Activated T-helper 2 cell treated with anti-CD3 and anti-CD28 coated beads, Interferon-gamma antibody, Interleukin-2, Interleukin-4, amounts not matched to agents 10 μg/mL and 5 μg/mL and 100 μg/mL, durations not matched to agents 14 hours and 24 hours and 36 hours (primary cell): ENCODE measurements at regions of chr18 and their contacts with region 1.

Region 1: DNA sequence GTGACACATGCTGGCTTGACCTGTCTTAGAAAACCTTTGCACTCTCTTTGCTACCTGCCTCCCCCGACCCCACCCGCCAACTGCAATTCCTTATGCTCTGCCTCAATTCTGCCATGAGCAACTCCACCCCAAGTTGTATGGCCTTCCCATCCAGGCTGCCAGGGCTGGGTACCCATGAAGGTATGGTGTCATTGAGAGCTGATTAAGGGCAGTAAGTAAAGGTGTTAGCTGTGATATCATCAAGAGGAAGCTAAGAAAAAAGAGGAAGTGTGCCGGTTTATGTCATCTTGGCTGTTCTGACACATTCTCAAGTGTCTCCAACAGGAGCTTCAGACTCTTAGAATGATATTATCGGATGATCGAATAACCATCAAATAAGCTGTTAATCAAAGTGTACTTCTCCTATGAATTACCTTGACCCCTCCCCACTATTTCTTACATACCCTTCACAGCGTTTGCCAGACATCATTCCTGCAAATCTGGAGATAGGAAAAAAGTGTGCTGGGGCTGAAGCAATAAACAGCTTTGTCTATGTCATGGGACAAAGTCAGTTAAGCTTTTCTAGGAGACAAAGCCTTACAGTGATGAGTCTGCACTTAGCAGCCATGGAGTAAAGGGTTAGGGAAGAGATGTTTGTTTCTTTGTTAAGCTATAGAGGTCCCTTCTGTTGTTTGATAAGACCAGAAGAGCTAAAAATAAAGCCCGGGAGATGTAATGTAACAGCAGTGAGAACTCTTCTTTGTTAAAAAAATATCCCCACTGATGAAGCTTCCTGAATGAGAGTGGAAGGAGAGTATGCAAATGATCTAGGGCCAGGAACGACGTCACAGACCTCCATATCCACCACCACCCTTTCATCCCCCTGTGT is 40.4 kb upstream of the SMAD2 start:
- DNase-seq: no peak
- H3K4me3 Mint-ChIP-seq: no peak overlapping the region
- H3K27ac Mint-ChIP-seq: no peak overlapping the region
- H3K4me1 Mint-ChIP-seq: peaks cover 5% of the 10 kb centered on the region
- H3K27me3 Mint-ChIP-seq: peaks cover 23% of the 10 kb centered on the region

Region 2: DNA sequence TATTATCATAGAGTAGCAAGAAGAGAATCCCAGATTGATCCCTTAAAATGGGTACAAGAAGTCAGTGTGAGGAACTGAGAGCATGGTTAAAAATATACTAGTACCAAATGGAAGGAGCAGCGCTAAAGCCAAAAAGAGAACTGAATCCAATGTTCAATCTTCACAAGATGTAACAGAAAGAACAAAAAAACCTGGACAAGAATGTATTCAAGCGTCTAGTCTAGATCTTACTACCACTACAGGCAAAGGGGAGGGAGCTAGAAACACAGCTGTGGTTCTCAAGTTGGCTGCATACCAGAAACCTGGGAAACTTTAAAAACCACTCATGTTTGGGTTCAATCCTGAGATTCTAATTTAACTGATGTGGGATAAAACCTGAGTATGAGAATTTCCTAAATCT is 1111.0 kb before region 1 on chr18:
- intact Hi-C with region 1: loop called (anchors 10 kb)
- DNase-seq: no peak
- H3K4me3 Mint-ChIP-seq: no peak overlapping the region
- H3K27ac Mint-ChIP-seq: no peak overlapping the region
- H3K4me1 Mint-ChIP-seq: peaks cover 11% of the 10 kb centered on the region
- H3K27me3 Mint-ChIP-seq: no peaks in the 10 kb centered on the region

Region 3: DNA sequence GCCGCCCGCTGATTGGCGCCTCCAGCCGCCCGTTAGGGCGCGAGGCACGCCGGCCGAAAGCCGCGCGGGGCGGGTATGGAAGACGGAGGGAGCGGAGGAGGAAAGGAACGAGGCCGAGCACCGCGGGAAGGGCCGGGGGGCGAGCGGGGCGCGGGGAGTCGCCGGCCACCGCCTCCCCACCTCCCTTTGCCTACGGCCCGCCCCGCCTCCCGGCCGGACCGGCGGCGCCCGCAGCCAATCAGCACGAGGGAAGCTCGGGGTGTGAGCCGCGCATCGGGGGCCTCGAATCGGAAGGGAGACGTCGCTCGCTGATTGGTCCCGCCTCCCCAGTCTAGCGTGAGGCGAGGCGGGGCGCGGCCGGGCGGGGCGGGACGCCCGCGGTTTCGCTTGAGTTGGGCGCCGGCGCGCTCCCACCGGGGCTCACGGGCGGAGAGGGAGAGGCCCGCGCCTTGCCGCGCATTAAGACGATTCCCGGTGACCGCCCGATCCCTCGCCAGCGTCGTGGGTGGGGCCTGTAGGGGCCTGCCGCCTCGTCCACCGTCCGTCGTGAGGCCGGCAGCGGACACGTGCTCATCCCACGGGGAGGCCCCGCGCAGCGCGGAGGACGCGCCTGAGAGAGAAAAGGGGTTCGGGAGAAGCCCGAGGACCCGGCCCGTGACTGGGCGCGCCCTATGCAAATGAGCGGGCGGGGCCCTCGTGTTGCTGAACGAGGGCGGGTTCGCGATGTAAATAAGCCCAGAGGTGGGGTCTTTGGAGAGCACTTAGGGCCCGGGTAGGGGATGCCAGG is 39.8 kb before region 1 on chr18:
- intact Hi-C with region 1: no loop called
- DNase-seq: peak; percentile 96
- H3K4me3 Mint-ChIP-seq: peak overlapping the region; percentile 83
- H3K27ac Mint-ChIP-seq: peak overlapping the region; percentile 92
- H3K4me1 Mint-ChIP-seq: peaks cover 44% of the 10 kb centered on the region
- H3K27me3 Mint-ChIP-seq: peaks cover 2% of the 10 kb centered on the region

Region 4: DNA sequence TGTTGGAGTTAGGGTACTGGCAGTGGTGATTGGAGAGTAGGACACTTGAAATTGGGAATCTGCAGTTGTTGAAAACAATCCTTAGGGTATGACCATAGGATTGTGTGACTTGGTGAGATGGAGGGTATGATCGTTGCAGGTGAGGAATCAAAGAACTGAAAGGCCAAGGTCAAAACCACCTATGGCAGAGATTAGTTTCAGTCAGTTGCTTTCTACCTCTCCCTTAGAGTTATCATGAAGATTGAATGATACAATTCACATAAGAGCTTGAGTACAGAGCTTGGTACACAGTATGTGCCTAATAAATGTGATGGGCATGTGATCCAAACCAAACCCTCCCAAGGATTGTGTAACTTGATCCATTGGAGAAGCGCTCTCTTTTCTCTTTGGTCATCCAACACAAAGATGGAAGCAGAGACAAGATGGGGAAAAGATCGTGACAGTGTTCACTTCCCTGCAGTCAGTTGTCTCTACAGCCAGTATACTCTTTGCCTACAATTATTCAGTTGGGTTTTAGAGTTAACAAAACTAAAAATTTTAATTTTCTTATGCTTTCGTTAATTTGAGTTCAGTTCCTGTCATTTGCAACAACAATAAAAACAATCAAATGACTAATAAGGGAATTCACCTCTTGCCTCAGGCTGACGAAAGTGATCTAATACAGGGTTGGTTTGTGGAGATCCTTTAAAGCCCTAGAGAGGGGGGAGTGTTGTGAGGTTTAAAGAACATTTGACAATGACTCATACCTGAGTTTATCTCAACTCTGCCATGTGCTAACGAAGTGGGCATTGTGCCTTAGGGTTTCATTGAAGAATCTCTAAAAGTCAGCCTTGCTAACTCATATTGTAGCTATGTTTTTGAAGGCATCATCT is 25.7 kb before region 1 on chr18:
- intact Hi-C with region 1: no loop called
- DNase-seq: no peak
- H3K4me3 Mint-ChIP-seq: no peak overlapping the region
- H3K27ac Mint-ChIP-seq: no peak overlapping the region
- H3K4me1 Mint-ChIP-seq: peaks cover 15% of the 10 kb centered on the region
- H3K27me3 Mint-ChIP-seq: peaks cover 3% of the 10 kb centered on the region

Region 5: DNA sequence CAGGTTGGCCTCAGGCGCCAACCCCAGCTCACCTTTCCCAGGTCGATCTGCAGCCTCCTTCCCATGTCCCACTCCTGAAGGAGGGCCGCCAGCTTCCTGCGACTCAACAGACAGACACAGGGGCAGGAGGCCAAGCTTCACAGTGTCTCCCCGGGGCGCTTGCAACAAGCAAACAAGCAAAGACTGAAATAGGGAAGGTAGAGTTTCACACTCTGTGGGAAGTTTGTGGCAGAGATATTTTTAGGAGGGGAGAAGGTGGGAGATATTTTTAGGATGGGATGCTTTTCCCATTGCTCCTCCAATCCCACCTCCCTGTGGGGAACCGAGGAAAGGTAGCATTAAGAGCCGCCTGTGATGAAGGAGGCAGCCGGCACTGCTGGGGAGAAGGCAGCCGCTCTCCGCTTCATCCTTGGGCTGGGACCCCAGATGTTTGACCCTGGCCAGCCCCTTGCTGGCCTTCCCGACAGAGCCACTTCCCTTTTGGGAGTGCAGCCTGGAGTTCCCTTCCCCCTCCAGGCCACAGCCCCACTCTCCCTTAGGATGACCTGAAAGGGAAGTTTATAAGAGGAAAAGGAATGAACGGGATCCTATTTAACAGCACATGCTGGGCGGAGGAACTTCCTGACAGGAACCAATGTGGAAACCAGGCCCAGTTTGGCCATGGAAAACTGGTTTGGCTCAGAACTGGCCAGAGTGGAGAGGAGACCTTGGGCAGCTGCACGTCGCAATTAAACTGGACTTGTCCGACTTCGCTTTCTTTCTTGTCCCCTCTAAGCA is 101.7 kb after region 1 on chr18:
- intact Hi-C with region 1: no loop called
- DNase-seq: no peak
- H3K4me3 Mint-ChIP-seq: no peak overlapping the region
- H3K27ac Mint-ChIP-seq: no peak overlapping the region
- H3K4me1 Mint-ChIP-seq: no peaks in the 10 kb centered on the region
- H3K27me3 Mint-ChIP-seq: peaks cover 8% of the 10 kb centered on the region

Region 6: GRCh38 chr18:48084041-48084768 is 113.3 kb after region 1 on chr18:
- intact Hi-C with region 1: no loop called
- DNase-seq: no peak
- H3K4me3 Mint-ChIP-seq: no peak overlapping the region
- H3K27ac Mint-ChIP-seq: no peak overlapping the region
- H3K4me1 Mint-ChIP-seq: no peaks in the 10 kb centered on the region
- H3K27me3 Mint-ChIP-seq: peaks cover 4% of the 10 kb centered on the region